CD4-positive, alpha-beta T cell (primary cell): ENCODE measurements at regions of chr2 and their contacts with region 1.

Region 1: DNA sequence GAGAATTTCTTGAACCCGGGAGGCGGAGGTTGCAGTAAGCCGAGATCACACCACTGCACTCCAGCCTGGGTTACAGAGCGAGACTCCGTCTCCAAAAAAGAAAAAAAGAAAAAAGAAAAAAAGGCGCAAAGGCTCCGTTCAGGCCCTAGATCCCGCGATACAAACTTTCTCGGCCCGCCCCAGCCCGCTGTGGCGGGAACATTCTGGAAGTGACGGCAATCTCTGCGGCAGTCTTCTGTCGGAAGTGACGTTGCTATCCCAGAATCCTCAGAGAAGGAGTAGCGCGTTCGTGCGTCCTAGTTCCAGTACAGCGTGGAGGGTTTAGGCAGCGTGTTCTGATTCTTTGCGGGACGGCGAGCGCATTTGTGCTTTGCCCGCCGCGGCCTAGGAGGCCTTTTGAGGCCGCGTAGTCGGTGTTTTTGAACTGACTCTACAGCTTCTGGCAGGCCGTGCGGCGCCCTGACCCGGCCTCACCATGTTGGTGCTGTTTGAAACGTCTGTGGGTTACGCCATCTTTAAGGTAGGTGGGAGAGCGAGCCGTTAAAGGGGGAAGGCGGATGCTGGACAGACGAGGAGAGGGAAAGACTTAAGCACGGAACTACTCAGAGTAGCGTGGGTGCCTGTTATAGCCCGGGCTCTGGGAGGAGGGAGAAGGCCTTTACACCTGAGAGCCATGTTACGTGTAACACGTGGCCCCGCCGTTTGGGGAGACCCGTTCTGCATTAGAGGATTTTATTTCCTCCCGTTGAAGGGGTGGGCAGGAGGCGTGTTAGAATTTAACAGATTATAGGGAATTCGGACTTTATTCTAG is at the start of gene NOP58:
- DNase-seq: peak; percentile 75 to 97 (median 84)
- ATAC-seq: peak; percentile 80
- H3K4me3 ChIP-seq: peak within 1 kb of the TSS; percentile 97
- H3K4me3 Mint-ChIP-seq: peak within 1 kb of the TSS; percentile 80
- H3K27ac ChIP-seq: peak within 1 kb of the TSS; percentile 97 to 99
- H3K27ac Mint-ChIP-seq: no peak within 1 kb of the TSS
- H3K4me1 ChIP-seq: peaks cover 29% of the 10 kb centered on the region
- H3K4me1 Mint-ChIP-seq: peaks cover 21% of the 10 kb centered on the region
- H3K27me3 ChIP-seq: no peaks in the 10 kb centered on the region
- H3K27me3 Mint-ChIP-seq: no peaks in the 10 kb centered on the region
- CTCF ChIP-seq: no peak
- total RNA-seq, gene NOP58: 280 to 288 TPM

Region 2: GRCh38 chr2:201257956-201258665 is 1007.6 kb before region 1 on chr2:
- CTCF ChIA-PET with region 1: no interaction called
- POLR2A ChIA-PET with region 1: no interaction called
- intact Hi-C with region 1: loop called in 1 of 2 experiments (anchors 10 kb)
- DNase-seq: peak; percentile 90 to 99 (median 95)
- ATAC-seq: peak; percentile 71
- H3K4me3 ChIP-seq: peak overlapping the region; percentile 62
- H3K4me3 Mint-ChIP-seq: peak overlapping the region; percentile 89
- H3K27ac ChIP-seq: peak overlapping the region; percentile 93 to 100
- H3K27ac Mint-ChIP-seq: peak overlapping the region; percentile 97
- H3K4me1 ChIP-seq: peaks cover 74% of the 10 kb centered on the region
- H3K4me1 Mint-ChIP-seq: peaks cover 75% of the 10 kb centered on the region
- H3K27me3 ChIP-seq: no peaks in the 10 kb centered on the region
- H3K27me3 Mint-ChIP-seq: no peaks in the 10 kb centered on the region
- CTCF ChIP-seq: no peak

Region 3: DNA sequence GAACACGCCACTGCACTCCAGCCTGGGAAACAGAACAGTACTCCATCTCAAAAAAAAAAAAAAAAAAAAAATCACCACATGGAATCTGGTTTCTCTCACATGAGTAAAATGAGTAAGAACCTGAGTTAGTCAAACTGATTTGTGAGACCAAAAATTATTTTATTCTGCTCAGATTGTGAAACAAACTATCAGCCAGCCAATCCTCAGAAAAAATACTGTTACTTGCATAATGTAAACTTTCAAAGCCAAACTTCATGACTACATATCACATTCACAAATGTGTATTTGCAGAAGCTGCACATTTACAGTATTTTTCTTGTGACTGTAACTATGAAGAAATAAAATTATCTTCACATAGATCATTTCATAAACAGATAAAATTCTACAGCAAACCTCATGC is 50.5 kb before region 1 on chr2:
- CTCF ChIA-PET with region 1: interaction called, 3 read pairs
- POLR2A ChIA-PET with region 1: no interaction called
- intact Hi-C with region 1: loop called in 1 of 2 experiments (anchors 5 kb)
- DNase-seq: no peak
- ATAC-seq: no peak
- H3K4me3 ChIP-seq: no peak overlapping the region
- H3K4me3 Mint-ChIP-seq: no peak overlapping the region
- H3K27ac ChIP-seq: no peak overlapping the region
- H3K27ac Mint-ChIP-seq: no peak overlapping the region
- H3K4me1 ChIP-seq: no peaks in the 10 kb centered on the region
- H3K4me1 Mint-ChIP-seq: peaks cover 16% of the 10 kb centered on the region
- H3K27me3 ChIP-seq: no peaks in the 10 kb centered on the region
- H3K27me3 Mint-ChIP-seq: no peaks in the 10 kb centered on the region
- CTCF ChIP-seq: no peak

Region 4: GRCh38 chr2:202278944-202279343 is 13.3 kb after region 1 on chr2:
- CTCF ChIA-PET with region 1: interaction called, 3 read pairs
- POLR2A ChIA-PET with region 1: interaction called, 18 read pairs
- intact Hi-C with region 1: loop called in 1 of 2 experiments (anchors 2 kb)
- DNase-seq: peak in 2 of 14 experiments; percentile 25 to 32
- ATAC-seq: peak; percentile 40
- H3K4me3 ChIP-seq: no peak overlapping the region
- H3K4me3 Mint-ChIP-seq: no peak overlapping the region
- H3K27ac ChIP-seq: no peak overlapping the region
- H3K27ac Mint-ChIP-seq: peak overlapping the region; percentile 50
- H3K4me1 ChIP-seq: peaks cover 3% of the 10 kb centered on the region
- H3K4me1 Mint-ChIP-seq: peaks cover 23% of the 10 kb centered on the region
- H3K27me3 ChIP-seq: no peaks in the 10 kb centered on the region
- H3K27me3 Mint-ChIP-seq: no peaks in the 10 kb centered on the region
- CTCF ChIP-seq: peak; percentile 46

Region 5: DNA sequence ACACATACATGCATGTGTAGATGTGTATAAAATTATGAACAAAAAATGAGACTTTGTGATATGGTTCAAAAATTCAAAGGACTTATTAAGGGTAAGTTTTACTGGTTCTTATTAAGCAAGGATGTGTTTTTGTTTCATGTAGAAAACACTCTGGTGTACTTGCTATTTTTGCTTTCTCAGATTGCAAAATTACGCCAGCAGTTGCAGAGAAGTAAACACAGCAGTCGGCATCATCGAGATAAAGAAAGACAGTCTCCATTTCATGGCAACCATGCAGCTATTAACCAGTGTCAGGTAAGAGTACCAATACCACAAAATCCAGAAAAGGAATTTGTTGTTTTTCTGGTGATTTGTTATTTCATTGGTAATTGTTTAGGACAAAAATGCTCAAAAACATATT is 460.4 kb after region 1 on chr2:
- CTCF ChIA-PET with region 1: no interaction called
- POLR2A ChIA-PET with region 1: no interaction called
- intact Hi-C with region 1: no loop called
- DNase-seq: no peak
- ATAC-seq: no peak
- H3K4me3 ChIP-seq: no peak overlapping the region
- H3K4me3 Mint-ChIP-seq: no peak overlapping the region
- H3K27ac ChIP-seq: no peak overlapping the region
- H3K27ac Mint-ChIP-seq: no peak overlapping the region
- H3K4me1 ChIP-seq: no peaks in the 10 kb centered on the region
- H3K4me1 Mint-ChIP-seq: peaks cover 49% of the 10 kb centered on the region
- H3K27me3 ChIP-seq: no peaks in the 10 kb centered on the region
- H3K27me3 Mint-ChIP-seq: no peaks in the 10 kb centered on the region
- CTCF ChIP-seq: no peak

Region 6: DNA sequence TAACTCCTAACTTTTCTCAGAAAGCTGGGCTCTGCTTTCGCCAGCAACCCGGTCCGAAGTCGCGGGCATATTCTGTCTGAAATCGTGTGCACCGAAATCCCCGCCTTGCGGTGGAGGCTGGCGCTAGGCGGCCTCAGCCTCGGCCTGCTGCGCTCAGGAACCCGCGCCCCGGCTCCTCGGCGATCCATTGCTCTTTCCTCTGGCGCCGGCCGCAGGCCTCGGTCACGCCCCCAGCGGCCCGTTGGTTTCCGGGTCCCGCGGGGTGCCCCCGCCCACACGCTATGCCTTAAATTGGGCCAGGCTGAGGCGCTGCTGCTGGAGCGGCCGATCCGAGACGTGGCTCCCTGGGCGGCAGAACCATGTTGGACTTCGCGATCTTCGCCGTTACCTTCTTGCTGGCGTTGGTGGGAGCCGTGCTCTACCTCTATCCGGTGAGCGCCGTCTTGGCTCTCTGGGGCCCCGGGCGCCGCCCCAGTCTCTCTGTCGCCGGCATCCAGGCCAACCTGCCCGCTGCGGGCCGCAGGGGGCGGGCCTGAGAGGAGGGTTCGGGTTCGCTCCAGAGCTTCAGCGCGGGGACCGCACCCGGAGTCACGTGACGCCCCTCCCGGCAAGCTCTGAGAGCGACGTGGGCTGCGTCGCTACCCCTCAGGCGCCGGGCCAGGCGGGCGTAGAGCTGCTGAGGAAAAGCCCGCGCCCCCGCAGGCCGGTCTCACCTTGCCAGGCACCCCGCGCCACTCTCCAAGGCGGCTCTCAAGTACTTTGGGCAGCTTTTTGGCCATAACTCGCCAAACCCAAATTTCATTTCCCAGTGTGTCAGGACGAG is 973.2 kb after region 1 on chr2 and contains the start of gene CYP20A1:
- CTCF ChIA-PET with region 1: no interaction called
- POLR2A ChIA-PET with region 1: interaction called, 5 read pairs
- intact Hi-C with region 1: loop called in 1 of 2 experiments (anchors 10 kb)
- DNase-seq: peak; percentile 93 to 98 (median 97)
- ATAC-seq: peak; percentile 79
- H3K4me3 ChIP-seq: peak within 1 kb of the TSS; percentile 88
- H3K4me3 Mint-ChIP-seq: peak within 1 kb of the TSS; percentile 96
- H3K27ac ChIP-seq: peak within 1 kb of the TSS; percentile 95 to 97
- H3K27ac Mint-ChIP-seq: peak within 1 kb of the TSS; percentile 99
- H3K4me1 ChIP-seq: peaks cover 28% of the 10 kb centered on the region
- H3K4me1 Mint-ChIP-seq: peaks cover 45% of the 10 kb centered on the region
- H3K27me3 ChIP-seq: no peaks in the 10 kb centered on the region
- H3K27me3 Mint-ChIP-seq: no peaks in the 10 kb centered on the region
- CTCF ChIP-seq: peak; percentile 12
- total RNA-seq, gene CYP20A1: 21.9 to 22.6 TPM